ENCODE measurements at regions of chr1 and their contacts with region 1.

Region 1: DNA sequence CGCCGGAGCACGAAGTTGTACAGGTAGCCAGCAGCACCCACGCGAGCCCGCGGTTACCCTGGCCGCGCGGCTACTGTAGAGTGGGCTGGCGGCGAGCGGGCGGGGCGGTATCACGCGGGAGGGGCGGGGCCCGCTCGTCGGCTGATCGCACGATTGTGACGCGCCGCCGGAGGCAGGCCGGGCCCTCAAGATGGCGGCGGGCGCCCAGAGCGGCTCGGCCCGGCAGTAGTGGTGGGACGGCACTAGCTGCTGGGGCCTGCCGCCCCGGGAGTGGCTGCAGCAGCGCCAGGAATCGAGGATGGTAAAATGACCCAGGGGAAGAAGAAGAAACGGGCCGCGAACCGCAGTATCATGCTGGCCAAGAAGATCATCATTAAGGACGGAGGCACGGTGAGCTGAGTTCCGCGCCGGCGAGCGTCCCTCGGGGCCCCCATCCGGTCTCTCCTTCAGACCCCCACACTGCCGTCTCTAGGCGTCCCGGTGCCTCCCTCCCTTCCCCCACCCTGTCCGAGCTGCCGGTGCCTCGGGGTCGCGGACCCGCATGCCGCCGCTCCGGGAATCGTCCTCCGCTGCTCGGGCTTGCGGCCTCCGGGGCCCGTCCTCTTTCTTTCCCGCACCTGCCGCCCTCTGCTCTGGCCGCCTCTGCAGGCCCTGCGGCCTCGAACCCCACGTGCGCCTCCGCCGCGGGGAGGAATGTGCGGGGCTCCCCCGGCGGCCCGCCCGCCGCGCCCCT is 68.3 kb downstream of the SLC35A3 start:
- DNase-seq: peak; percentile 97
- H3K4me3 Mint-ChIP-seq: peak overlapping the region; percentile 94
- H3K27ac Mint-ChIP-seq: peak overlapping the region; percentile 95
- H3K4me1 Mint-ChIP-seq: peaks cover 44% of the 10 kb centered on the region
- H3K27me3 Mint-ChIP-seq: no peaks in the 10 kb centered on the region

Region 2: DNA sequence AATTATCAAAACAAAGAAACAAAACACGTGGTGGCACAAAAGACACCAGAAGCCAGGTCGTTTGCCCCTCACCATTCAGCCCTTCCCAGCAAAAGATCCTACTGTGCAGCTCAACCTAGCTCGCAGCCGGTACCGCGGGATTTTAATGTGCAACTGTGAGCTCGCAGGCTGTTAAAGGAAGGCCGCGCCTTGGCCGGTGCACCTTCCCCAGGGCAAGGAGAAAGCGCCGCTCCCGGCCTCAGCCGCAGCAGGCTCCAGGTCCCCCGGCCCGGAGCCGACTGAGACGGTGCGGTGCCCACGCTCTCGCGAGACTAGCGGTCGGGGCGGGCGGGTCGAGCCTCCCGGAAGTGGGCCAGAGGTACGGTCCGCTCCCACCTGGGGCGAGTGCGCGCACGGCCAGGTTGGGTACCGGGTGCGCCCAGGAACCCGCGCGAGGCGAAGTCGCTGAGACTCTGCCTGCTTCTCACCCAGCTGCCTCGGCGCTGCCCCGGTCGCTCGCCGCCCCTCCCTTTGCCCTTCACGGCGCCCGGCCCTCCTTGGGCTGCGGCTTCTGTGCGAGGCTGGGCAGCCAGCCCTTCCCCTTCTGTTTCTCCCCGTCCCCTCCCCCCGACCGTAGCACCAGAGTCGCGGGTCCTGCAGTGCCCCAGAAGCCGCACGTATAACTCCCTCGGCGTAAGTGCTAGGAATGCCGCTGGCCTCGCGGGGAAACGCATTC is 188.2 kb before region 1 on chr1 and contains the start of gene AGL:
- intact Hi-C with region 1: loop called (anchors 1 kb)
- DNase-seq: peak; percentile 96
- H3K4me3 Mint-ChIP-seq: peak within 1 kb of the TSS; percentile 97
- H3K27ac Mint-ChIP-seq: peak within 1 kb of the TSS; percentile 90
- H3K4me1 Mint-ChIP-seq: peaks cover 15% of the 10 kb centered on the region
- H3K27me3 Mint-ChIP-seq: peaks cover 5% of the 10 kb centered on the region
- total RNA-seq, gene AGL: 12.9 and 13.7 TPM in 2 replicates

Region 3: GRCh38 chr1:99992760-99993467 is 45.2 kb before region 1 on chr1:
- intact Hi-C with region 1: no loop called
- DNase-seq: no peak
- H3K4me3 Mint-ChIP-seq: no peak overlapping the region
- H3K27ac Mint-ChIP-seq: no peak overlapping the region
- H3K4me1 Mint-ChIP-seq: peaks cover 6% of the 10 kb centered on the region
- H3K27me3 Mint-ChIP-seq: no peaks in the 10 kb centered on the region

Region 4: DNA sequence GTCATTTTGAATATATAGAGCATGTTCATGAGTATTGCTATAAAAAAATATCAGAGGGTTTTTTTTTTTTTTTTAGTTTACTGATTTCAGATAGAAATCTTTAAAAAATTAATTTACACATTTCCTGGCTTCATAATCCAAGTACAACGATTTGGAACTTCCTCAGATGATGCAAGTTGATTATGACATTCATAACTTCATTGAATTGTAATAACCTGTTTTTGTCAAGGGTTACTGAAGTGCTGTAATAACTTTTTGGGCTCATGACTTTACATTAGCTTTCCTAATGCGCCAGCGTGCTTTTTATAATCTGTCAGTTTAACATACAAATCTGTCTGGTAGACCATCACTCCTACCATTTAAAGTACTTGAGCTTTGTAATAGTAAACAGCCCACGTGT is 13.3 kb after region 1 on chr1:
- intact Hi-C with region 1: loop called (anchors 1 kb)
- DNase-seq: no peak
- H3K4me3 Mint-ChIP-seq: no peak overlapping the region
- H3K27ac Mint-ChIP-seq: no peak overlapping the region
- H3K4me1 Mint-ChIP-seq: peaks cover 38% of the 10 kb centered on the region
- H3K27me3 Mint-ChIP-seq: no peaks in the 10 kb centered on the region

Region 5: GRCh38 chr1:100249537-100250257 is 211.6 kb after region 1 on chr1 and contains the start of gene DBT:
- intact Hi-C with region 1: loop called (anchors 5 kb)
- DNase-seq: peak; percentile 98
- H3K4me3 Mint-ChIP-seq: no peak within 1 kb of the TSS
- H3K27ac Mint-ChIP-seq: no peak within 1 kb of the TSS
- H3K4me1 Mint-ChIP-seq: peaks cover 11% of the 10 kb centered on the region
- H3K27me3 Mint-ChIP-seq: peaks cover 8% of the 10 kb centered on the region
- total RNA-seq, gene DBT: 11.9 and 12.4 TPM in 2 replicates

Region 6: GRCh38 chr1:100351095-100351891 is 313.2 kb after region 1 on chr1:
- intact Hi-C with region 1: loop called (anchors 1 kb)
- DNase-seq: peak; percentile 96
- H3K4me3 Mint-ChIP-seq: peak overlapping the region; percentile 96
- H3K27ac Mint-ChIP-seq: peak overlapping the region; percentile 98
- H3K4me1 Mint-ChIP-seq: peaks cover 42% of the 10 kb centered on the region
- H3K27me3 Mint-ChIP-seq: no peaks in the 10 kb centered on the region

Region 7: DNA sequence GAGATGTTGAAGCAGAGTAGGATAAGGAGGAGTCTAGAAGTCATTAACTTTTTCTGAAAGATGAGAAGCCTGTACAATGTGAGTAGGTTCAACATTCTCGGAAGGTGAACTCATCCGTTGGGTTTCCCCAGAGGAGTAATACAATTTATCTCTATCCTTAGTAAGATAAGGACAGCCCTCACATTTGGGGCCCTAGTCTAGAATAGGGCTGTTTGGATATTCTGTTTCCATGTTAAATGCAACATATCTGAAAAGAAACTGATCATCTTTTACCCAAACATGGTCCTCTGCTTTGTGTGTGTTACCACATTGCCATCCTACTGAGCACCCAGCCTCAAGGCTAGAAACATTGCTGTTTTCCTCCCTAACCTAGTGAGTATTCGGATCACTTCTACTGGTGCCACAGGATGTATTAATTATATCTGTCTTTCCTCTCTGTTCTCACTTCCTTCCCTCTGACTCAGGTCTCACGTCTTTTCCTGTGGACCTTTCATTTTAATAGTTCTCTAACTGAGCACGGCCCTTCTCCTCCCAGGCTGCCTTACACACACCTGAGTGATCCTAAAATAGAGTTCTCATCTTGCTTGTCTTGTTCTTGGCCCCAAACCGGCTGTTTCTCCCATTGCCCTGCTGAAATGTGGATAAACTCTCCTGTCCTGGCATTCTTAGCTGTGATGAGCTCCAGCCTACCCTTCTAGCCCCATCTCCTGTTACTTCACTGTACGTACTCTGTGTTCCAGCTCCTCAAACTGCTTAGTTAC is 405.9 kb after region 1 on chr1:
- intact Hi-C with region 1: loop called (anchors 5 kb)
- DNase-seq: peak; percentile 82
- H3K4me3 Mint-ChIP-seq: peak overlapping the region; percentile 86
- H3K27ac Mint-ChIP-seq: peak overlapping the region; percentile 96
- H3K4me1 Mint-ChIP-seq: peaks cover 72% of the 10 kb centered on the region
- H3K27me3 Mint-ChIP-seq: no peaks in the 10 kb centered on the region

Region 8: DNA sequence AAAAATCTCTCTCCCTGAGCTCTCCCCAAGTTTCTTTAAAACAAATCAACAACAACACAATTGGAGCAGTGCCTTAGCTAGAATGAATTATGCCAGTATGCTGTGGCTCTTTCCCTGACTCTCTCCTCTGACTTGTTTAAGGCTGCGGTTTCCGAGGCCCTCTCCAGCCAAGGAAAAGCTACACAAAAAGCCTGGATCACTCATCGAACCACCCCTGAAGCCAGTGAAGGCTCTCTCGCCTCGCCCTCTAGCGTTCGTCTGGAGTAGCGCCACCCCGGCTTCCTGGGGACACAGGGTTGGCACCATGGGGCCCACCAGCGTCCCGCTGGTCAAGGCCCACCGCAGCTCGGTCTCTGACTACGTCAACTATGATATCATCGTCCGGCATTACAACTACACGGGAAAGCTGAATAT is 1200.6 kb after region 1 on chr1:
- intact Hi-C with region 1: loop called (anchors 2 kb)
- DNase-seq: peak; percentile 96
- H3K4me3 Mint-ChIP-seq: peak overlapping the region; percentile 90
- H3K27ac Mint-ChIP-seq: peak overlapping the region; percentile 96
- H3K4me1 Mint-ChIP-seq: peaks cover 52% of the 10 kb centered on the region
- H3K27me3 Mint-ChIP-seq: no peaks in the 10 kb centered on the region

Measured in activated CD4-positive, alpha-beta T cell treated with anti-CD3 and anti-CD28 coated beads, Interleukin-2, amount 10 ng/mL, durations not matched to agents 24 days and 14 days (primary cell).